ENCODE measurements at regions of chr1 and their contacts with region 1.

Region 1: GRCh38 chr1:206969090-206969489 is 1.2 kb downstream of the FCAMR start:
- DNase-seq: peak; percentile 66 to 84
- H3K4me3 ChIP-seq: no peak overlapping the region
- H3K4me3 Mint-ChIP-seq: no peak overlapping the region
- H3K27ac Mint-ChIP-seq: no peak overlapping the region
- H3K4me1 ChIP-seq: peaks cover 41% of the 10 kb centered on the region
- H3K4me1 Mint-ChIP-seq: peaks cover 14% of the 10 kb centered on the region
- H3K27me3 ChIP-seq: no peaks in the 10 kb centered on the region
- H3K27me3 Mint-ChIP-seq: no peaks in the 10 kb centered on the region
- CTCF ChIP-seq: no peak

Region 2: DNA sequence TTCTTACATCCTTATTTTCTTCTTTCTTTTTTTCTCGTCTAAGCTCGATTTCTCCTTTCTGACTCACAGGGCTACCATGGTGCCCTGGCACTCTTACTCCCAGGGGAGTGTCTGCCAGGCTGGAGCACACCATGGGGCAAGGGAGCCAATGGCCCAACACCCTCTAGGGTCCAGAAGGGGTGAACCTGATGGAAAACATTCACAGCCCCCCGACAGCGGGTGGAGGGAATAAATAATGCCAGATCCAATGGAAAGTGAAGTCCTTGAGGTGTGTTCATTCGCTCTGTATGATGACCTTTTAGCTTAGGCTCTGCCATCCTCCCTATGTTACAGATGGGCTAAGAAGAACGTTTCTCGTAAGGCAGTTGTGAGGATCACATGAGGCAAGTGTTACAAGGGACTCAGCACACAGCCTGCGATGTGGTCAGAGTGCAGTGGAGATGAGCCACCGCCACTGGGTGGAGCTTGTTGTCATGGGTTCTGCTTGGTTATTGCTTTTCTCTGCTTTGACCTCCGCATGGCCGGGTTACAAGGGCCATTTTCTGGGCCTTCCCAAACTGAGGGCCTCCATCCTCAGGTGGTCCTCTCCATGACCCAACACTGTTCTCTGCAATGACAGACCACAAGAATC is 43.9 kb before region 1 on chr1:
- CTCF ChIA-PET with region 1: no interaction called
- POLR2A ChIA-PET with region 1: no interaction called
- intact Hi-C with region 1: no loop called
- DNase-seq: peak; percentile 33 to 51
- H3K4me3 ChIP-seq: no peak overlapping the region
- H3K4me3 Mint-ChIP-seq: no peak overlapping the region
- H3K27ac Mint-ChIP-seq: no peak overlapping the region
- H3K4me1 ChIP-seq: peaks cover 11% of the 10 kb centered on the region
- H3K4me1 Mint-ChIP-seq: no peaks in the 10 kb centered on the region
- H3K27me3 ChIP-seq: no peaks in the 10 kb centered on the region
- H3K27me3 Mint-ChIP-seq: no peaks in the 10 kb centered on the region
- CTCF ChIP-seq: no peak

Region 3: GRCh38 chr1:206935491-206936067 is 33.5 kb before region 1 on chr1:
- CTCF ChIA-PET with region 1: interaction called, 4 read pairs
- POLR2A ChIA-PET with region 1: no interaction called
- intact Hi-C with region 1: loop called (anchors 2 kb)
- DNase-seq: peak; percentile 66 to 78
- H3K4me3 ChIP-seq: no peak overlapping the region
- H3K4me3 Mint-ChIP-seq: no peak overlapping the region
- H3K27ac Mint-ChIP-seq: no peak overlapping the region
- H3K4me1 ChIP-seq: no peaks in the 10 kb centered on the region
- H3K4me1 Mint-ChIP-seq: no peaks in the 10 kb centered on the region
- H3K27me3 ChIP-seq: no peaks in the 10 kb centered on the region
- H3K27me3 Mint-ChIP-seq: no peaks in the 10 kb centered on the region
- CTCF ChIP-seq: peak; percentile 86 to 94

Region 4: GRCh38 chr1:206955476-206956451 is 13.3 kb before region 1 on chr1:
- CTCF ChIA-PET with region 1: interaction called, 3 read pairs
- POLR2A ChIA-PET with region 1: no interaction called
- intact Hi-C with region 1: loop called (anchors 2 kb)
- DNase-seq: peak; percentile 32 to 65
- H3K4me3 ChIP-seq: no peak overlapping the region
- H3K4me3 Mint-ChIP-seq: peak overlapping the region; percentile 29
- H3K27ac Mint-ChIP-seq: peak overlapping the region; percentile 36
- H3K4me1 ChIP-seq: peaks cover 52% of the 10 kb centered on the region
- H3K4me1 Mint-ChIP-seq: peaks cover 41% of the 10 kb centered on the region
- H3K27me3 ChIP-seq: no peaks in the 10 kb centered on the region
- H3K27me3 Mint-ChIP-seq: no peaks in the 10 kb centered on the region
- CTCF ChIP-seq: no peak

Measured in Caco-2 (cell line).